Activated CD4-positive, alpha-beta T cell treated with anti-CD3 and anti-CD28 coated beads for 36 hours (primary cell): ENCODE measurements at regions of chr11 and their contacts with region 1.

Region 1: DNA sequence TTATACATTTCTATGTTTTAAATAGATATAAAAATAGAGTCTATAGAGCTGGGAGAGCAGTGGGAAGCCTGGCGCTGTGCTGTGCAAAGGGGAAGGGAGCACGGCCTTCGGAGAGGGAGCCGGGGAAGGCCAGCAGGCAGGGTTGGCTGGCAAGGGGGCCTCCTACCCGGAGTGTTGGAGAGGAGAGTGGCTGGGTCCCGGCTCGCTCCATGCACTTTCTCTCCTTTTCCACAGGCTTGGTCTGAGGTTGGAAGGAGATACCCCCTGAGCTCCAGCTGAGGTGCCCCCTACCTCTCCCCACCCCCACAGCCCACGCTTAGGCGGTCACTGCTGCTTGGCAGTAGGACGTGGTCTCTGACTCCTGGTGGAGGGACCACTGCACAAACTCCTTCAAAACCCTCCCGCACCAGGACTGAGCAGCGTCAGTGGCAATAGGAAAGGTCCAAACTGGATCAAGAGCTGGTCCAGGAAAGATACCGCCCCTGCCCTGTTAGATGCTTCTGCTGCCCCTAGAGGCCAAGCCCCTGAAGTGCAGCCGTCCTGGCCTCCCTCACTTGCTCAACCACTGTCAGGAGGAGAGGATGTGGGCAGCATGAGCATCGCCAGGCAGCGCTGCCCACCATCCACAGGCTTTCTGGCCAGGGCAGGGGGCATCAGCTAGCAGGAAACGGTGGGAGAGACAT is 52.9 kb downstream of the SYT13 start:
- DNase-seq: peak; percentile 82
- ATAC-seq: peak; percentile 70
- H3K4me3 Mint-ChIP-seq: no peak overlapping the region
- H3K27ac Mint-ChIP-seq: no peak overlapping the region
- H3K4me1 Mint-ChIP-seq: no peaks in the 10 kb centered on the region
- H3K27me3 Mint-ChIP-seq: peaks cover 14% of the 10 kb centered on the region

Region 2: DNA sequence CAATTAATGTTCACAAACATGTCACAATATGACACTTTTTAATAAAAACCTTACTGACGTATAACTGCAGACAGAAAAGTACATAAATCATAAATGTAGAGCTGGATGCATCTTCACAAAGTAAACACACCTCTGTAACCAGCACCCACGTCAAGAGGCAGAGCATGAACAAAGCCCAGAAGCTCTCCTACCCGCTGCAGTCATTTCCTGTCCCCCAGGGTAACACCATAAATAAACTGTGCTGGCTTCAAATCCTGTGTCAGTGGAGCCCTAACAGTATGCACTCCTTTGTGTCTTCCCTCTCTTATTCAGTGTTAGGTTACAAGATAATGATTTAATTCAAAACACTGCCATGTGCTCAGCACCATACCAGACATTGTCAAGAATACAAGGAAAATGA is 47.2 kb after region 1 on chr11:
- CTCF ChIA-PET with region 1: no interaction called
- POLR2A ChIA-PET with region 1: no interaction called
- intact Hi-C with region 1: loop called in 1 of 2 experiments (anchors 5 kb)
- DNase-seq: no peak
- ATAC-seq: no peak
- H3K4me3 Mint-ChIP-seq: no peak overlapping the region
- H3K27ac Mint-ChIP-seq: no peak overlapping the region
- H3K4me1 Mint-ChIP-seq: no peaks in the 10 kb centered on the region
- H3K27me3 Mint-ChIP-seq: peaks cover 35% of the 10 kb centered on the region